ENCODE measurements at regions of chr2 and their contacts with region 1.

Region 1: DNA sequence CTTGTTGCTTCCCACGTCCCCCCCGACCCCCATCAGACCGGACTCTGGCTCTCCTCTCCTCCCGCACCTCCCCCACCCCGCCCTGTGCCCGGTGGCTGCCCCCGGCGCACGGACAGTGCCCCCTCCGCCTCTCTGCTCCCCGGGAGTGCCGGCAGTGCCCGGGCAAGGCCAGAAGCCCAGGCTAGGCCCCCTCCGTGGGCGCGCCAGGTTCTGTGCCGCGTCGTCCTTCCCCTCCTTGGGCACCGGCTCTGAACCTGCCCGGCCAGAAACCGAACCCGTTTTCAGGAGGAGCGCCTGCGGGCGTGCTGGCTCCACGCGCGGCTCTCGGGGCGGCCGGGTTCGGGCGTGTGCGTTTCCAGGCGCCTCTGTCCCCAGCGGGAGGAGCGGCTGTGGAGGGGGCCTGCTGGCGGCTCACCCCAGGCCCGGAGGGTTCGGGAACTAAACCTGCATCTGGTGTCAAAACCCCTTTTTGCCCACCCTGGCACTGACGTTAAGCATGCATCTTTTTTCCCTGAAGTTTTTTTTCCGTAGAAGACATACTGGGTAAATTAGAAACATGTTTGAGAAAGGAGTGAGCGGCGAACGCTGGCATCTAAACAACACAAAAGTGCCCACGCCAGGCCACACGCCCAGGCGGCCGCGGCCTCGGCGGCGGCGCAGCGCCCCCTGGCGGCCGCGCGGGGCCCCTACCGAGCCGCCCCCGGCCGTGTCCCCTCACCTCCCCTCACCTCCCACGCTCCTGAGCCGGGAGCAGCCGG is 123.9 kb upstream of the SLC1A4 start:
- DNase-seq: peak in 9 of 10 donors; percentile 51 to 77 (median 64)
- H3K4me3 ChIP-seq: peak overlapping the region; percentile 49 to 89 (median 79)
- H3K27ac ChIP-seq: peak overlapping the region; percentile 4 to 98 (median 91)
- H3K27me3 ChIP-seq: no peaks in the 10 kb centered on the region
- CTCF ChIP-seq: peak in 55 of 56 donors; percentile 20 to 100 (median 74)

Region 2: GRCh38 chr2:64523666-64524603 is 341.3 kb before region 1 on chr2 and contains the start of gene AFTPH:
- intact Hi-C with region 1: loop called (anchors 2 to 5 kb)
- DNase-seq: peak; percentile 97 to 99 (median 98)
- H3K4me3 ChIP-seq: peak within 1 kb of the TSS; percentile 64 to 99 (median 92)
- H3K27ac ChIP-seq: peak within 1 kb of the TSS; percentile 79 to 98 (median 94)
- H3K27me3 ChIP-seq: no peaks in the 10 kb centered on the region
- CTCF ChIP-seq: peak in 42 of 56 donors; percentile 5 to 61 (median 30)
- total RNA-seq, gene AFTPH: 26.7 to 61.2 (median 44.9) TPM

Region 3: DNA sequence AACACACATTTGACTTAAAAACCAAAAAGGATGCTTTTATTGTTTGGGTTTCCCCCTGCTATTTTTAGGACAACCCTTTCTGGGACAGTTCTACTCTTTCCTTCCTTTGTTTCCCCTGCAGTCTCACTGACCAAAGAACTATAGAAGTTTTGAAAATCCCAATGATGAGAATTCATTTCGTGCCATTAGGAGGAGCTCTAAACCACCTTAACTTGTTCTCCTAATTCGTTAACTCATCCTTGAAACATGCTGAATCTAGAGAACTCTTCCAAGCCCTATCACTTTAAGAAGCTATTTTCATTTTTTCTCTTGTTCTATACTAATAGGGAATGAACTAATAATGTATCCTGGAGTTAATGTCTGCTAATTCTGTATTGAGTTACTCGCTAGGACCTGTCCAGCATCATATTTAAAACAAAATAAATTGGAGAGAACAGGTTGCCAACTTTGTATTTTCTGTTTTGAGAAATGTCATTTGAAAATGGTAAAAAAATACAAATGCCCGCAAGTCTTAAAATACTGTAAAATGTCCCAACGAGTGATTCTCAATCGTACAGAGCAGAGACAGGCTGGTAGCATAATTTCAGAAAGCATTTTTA is 278.3 kb before region 1 on chr2:
- intact Hi-C with region 1: loop called (anchors 2 to 5 kb)
- DNase-seq: no peak
- H3K4me3 ChIP-seq: no peak overlapping the region
- H3K27ac ChIP-seq: peak overlapping the region in 4 of 59 donors; percentile 2 to 40 (median 18)
- H3K27me3 ChIP-seq: no peaks in the 10 kb centered on the region
- CTCF ChIP-seq: peak; percentile 16 to 85 (median 68)

Region 4: GRCh38 chr2:64595397-64596160 is 269.7 kb before region 1 on chr2:
- intact Hi-C with region 1: loop called in 1 of 2 experiments (anchors 2 kb)
- DNase-seq: no peak
- H3K4me3 ChIP-seq: no peak overlapping the region
- H3K27ac ChIP-seq: no peak overlapping the region
- H3K27me3 ChIP-seq: no peaks in the 10 kb centered on the region
- CTCF ChIP-seq: peak in 52 of 56 donors; percentile 18 to 74 (median 44)

Region 5: DNA sequence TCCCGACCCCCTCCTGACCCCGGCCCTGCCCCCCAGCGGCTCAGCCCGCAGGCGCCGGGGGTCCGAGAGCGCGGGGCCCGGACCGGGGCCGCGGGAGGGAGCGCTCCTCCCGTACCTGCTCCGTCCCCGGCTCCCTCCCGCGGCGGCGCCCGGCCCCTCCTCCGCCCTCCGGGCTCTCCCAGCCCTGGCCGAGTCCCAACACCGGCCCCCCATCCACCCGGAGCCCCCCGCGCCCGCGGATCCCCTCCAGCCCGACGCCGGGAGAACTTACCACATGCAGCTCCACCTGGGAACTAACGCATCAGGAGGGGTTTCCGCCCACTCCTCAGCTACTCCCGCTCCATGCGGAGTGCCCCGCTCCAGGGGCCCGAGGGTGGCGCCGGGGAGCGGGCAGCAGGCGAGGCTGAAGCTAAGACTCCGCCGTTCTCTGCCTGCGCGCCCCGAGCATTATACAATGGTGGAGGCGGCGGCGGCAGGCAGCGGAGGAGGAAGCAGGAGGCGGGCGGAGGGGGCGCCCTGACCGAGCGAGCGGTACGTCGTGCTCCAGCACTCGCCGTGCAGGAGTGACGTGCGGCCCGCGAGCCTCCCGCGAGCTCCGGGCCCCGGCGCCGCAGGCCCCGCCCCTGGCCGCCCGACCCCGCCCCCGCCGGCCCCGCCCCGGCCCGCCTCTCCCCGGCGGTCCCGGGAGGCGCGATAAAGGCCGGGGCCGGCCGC is 211.7 kb before region 1 on chr2 and contains the start of gene SERTAD2:
- intact Hi-C with region 1: loop called (anchors 2 kb)
- DNase-seq: peak; percentile 72 to 90 (median 83)
- H3K4me3 ChIP-seq: peak within 1 kb of the TSS; percentile 74 to 99 (median 93)
- H3K27ac ChIP-seq: peak within 1 kb of the TSS; percentile 83 to 99 (median 96)
- H3K27me3 ChIP-seq: no peaks in the 10 kb centered on the region
- CTCF ChIP-seq: peak in 25 of 56 donors; percentile 3 to 41 (median 16)
- total RNA-seq, gene SERTAD2: 7.8 to 24.8 (median 13.4) TPM

Region 6: GRCh38 chr2:64767670-64768468 is 97.4 kb before region 1 on chr2:
- intact Hi-C with region 1: loop called (anchors 2 to 5 kb)
- DNase-seq: peak; percentile 72 to 92 (median 88)
- H3K4me3 ChIP-seq: peak overlapping the region; percentile 56 to 92 (median 81)
- H3K27ac ChIP-seq: peak overlapping the region; percentile 92 to 100 (median 99)
- H3K27me3 ChIP-seq: no peaks in the 10 kb centered on the region
- CTCF ChIP-seq: peak in 42 of 56 donors; percentile 4 to 63 (median 26)

Region 7: DNA sequence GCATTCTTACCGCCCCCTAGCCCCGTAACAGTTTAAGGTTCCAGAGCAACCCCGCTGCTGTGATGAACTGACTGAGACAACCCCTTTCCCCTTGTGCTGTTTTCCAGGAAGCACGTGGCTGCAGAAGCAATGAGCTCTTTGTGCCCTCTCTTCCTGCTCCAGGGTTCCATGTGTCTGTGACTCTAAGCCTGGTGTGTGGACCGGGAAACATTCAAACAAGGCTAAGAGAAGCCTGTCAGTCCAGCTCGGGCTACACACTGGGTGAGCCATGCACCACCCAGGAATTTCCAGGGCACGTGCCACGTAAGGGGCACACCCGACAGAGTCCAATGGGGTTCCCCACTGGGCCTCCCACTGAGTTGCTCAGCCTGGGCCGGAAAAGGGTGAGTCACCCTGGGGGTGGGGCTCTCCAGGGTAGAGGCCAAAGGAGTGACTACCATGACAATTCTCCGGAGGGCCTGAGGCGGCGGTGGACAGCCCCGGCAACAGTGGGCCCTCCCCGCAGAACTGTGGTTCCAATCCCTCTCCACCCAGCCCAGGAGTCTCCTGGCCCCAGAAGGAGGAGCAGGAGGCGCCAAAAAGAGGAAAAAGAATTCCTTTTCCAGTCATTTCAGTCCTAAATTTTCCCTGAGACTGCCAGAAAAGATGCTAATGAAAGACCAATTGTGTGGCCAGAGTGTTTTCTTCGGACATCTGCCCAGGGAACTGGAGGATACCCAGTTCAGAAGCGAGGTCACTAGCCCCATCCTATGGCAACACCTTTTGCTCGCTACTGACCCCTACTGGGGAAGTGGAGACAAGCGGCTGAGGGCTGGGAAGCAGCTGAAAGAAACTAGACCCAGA is 33.9 kb before region 1 on chr2:
- intact Hi-C with region 1: loop called in 1 of 2 experiments (anchors 2 kb)
- DNase-seq: peak; percentile 18 to 85 (median 68)
- H3K4me3 ChIP-seq: peak overlapping the region in 43 of 59 donors; percentile 1 to 64 (median 31)
- H3K27ac ChIP-seq: peak overlapping the region in 58 of 59 donors; percentile 10 to 94 (median 82)
- H3K27me3 ChIP-seq: no peaks in the 10 kb centered on the region
- CTCF ChIP-seq: peak; percentile 30 to 92 (median 82)

Measured in dorsolateral prefrontal cortex (tissue), 120 donors.